Activated T-helper 1 cell treated with anti-CD3 and anti-CD28 coated beads, Interleukin-12 subunit alpha, Interleukin-12 subunit beta, Interleukin-2, Interleukin-4 antibody, amounts not matched to agents 30 ng/mL and 10 ng/mL and 1 ng/mL, durations not matched to agents 14 hours and 24 hours and 36 hours (primary cell): ENCODE measurements at regions of chr3 and their contacts with region 1.

Region 1: GRCh38 chr3:183285828-183286457 is 32.9 kb downstream of the B3GNT5 start:
- DNase-seq: peak; percentile 90
- H3K4me3 Mint-ChIP-seq: peak overlapping the region; percentile 60
- H3K27ac Mint-ChIP-seq: peak overlapping the region; percentile 94
- H3K4me1 Mint-ChIP-seq: peaks cover 36% of the 10 kb centered on the region
- H3K27me3 Mint-ChIP-seq: no peaks in the 10 kb centered on the region

Region 2: DNA sequence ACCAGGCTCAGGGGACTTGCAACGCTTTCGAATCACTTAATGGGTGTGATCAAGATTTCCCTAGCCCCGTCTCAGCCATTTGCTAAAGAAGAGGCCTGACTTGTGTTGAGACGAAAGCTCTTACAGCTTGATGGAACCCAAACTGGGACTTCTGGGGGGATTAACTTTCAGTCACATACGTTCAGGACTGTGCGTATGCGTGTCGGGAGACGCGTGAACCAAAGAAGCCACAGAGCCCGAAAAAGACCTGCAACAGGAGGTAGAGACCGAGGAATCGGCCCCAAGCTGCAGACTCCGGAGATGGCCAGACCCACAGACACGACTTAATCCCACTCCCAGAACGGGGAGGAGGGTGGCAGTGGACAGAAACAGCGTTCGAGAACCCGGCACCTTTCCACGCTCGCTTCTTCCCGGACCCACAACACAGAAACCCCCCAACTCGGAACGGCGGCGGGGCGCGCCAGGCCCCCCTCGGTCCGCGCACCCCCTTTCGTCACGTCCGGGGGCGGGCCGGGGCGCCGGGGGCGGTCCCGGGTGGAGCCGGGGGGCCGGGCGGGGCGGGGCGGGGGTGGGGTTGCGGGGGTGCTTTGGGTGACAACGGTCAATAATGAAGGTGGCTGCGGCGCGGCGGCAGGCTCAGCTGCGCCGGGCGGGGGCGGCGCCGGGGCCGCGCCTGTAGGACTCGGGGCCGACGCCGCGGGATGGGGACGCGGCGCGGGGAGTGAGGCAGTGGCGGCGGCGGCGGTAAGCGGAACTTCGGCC is 492.9 kb before region 1 on chr3 and contains the start of gene ATP11B:
- intact Hi-C with region 1: loop called (anchors 10 kb)
- DNase-seq: peak; percentile 75
- H3K4me3 Mint-ChIP-seq: peak within 1 kb of the TSS; percentile 94
- H3K27ac Mint-ChIP-seq: peak within 1 kb of the TSS; percentile 98
- H3K4me1 Mint-ChIP-seq: peaks cover 34% of the 10 kb centered on the region
- H3K27me3 Mint-ChIP-seq: no peaks in the 10 kb centered on the region
- total RNA-seq, gene ATP11B: 92.3 and 95.1 TPM in 2 replicates

Region 3: DNA sequence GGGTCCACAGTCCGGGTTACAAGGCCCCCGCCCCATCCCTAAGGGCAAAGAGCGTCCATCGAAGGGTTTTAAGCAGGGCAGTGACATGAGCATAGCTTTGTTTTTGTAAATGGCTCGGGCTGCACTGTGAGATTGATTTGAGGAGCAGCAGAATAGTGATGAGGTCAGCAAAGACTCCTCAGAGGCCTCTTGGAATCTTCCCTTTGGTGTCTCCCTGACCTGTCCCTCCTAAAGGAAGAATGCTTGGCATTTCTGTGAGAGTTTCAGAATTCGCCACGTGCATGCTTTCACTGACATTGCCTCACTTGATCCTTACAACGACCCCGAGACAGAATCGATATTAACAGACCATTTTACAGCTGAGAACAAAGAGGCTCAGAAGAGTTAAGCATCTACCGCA is 143.7 kb before region 1 on chr3:
- intact Hi-C with region 1: no loop called
- DNase-seq: no peak
- H3K4me3 Mint-ChIP-seq: no peak overlapping the region
- H3K27ac Mint-ChIP-seq: no peak overlapping the region
- H3K4me1 Mint-ChIP-seq: no peaks in the 10 kb centered on the region
- H3K27me3 Mint-ChIP-seq: no peaks in the 10 kb centered on the region

Region 4: DNA sequence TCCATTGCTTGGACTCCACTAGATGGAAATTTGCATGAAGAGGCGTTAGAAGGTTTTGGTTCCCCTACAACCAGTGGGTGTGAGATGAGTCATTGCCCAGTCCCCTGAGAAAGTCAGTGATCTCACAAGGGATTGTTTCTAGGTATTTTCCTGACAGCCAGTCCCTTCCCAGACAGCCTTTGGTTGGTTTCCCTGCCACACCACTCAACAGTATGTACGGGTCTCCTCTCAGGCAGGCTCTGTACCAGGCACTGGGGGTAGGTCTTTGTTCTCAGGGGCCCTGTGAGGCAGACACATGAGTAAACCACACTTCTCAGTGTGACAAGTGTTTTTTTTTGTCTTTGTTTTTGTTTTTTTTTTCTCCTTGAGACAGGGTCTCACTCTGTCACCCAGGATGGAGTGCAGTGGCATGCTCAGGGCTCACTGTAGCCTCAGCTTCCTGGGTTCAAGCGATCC is 127.4 kb before region 1 on chr3:
- intact Hi-C with region 1: loop called (anchors 1 kb)
- DNase-seq: peak; percentile 33
- H3K4me3 Mint-ChIP-seq: peak overlapping the region; percentile 45
- H3K27ac Mint-ChIP-seq: peak overlapping the region; percentile 73
- H3K4me1 Mint-ChIP-seq: peaks cover 48% of the 10 kb centered on the region
- H3K27me3 Mint-ChIP-seq: no peaks in the 10 kb centered on the region

Region 5: DNA sequence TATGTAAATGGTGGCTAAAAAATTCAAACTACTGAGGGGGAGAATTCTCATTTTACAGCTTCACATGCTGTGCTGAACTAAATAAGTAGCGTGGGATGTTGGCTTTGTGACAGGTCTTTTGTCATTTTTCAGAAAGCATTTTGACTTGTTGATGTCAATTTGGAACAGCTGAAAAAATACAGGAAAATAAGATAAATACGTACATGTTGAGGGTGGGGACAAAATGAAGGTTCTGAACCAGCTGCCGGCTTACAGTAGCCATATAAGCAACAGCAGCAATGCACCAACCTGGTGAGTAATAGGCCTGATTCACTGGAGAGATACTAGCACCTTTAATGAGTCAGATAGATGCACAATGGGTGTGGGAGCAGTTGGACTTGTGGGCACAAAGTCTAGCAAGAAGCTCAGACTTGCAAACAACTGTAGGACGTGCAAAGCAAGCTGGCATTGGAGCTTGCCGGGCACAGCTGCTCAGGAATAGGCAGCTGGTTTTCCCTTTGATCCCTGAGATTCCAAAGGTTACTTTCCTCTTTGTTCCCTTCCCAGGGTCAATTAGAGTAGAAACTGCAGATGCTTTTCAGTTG is 20.0 kb before region 1 on chr3:
- intact Hi-C with region 1: loop called (anchors 1 kb)
- DNase-seq: peak; percentile 7
- H3K4me3 Mint-ChIP-seq: peak overlapping the region; percentile 25
- H3K27ac Mint-ChIP-seq: no peak overlapping the region
- H3K4me1 Mint-ChIP-seq: peaks cover 15% of the 10 kb centered on the region
- H3K27me3 Mint-ChIP-seq: no peaks in the 10 kb centered on the region

Region 6: GRCh38 chr3:183377307-183377959 is 91.5 kb after region 1 on chr3:
- intact Hi-C with region 1: loop called (anchors 1 kb)
- DNase-seq: no peak
- H3K4me3 Mint-ChIP-seq: no peak overlapping the region
- H3K27ac Mint-ChIP-seq: no peak overlapping the region
- H3K4me1 Mint-ChIP-seq: peaks cover 36% of the 10 kb centered on the region
- H3K27me3 Mint-ChIP-seq: no peaks in the 10 kb centered on the region

Region 7: GRCh38 chr3:183468424-183468823 is 182.5 kb after region 1 on chr3:
- intact Hi-C with region 1: loop called (anchors 1 kb)
- DNase-seq: no peak
- H3K4me3 Mint-ChIP-seq: peak overlapping the region; percentile 12
- H3K27ac Mint-ChIP-seq: peak overlapping the region; percentile 75
- H3K4me1 Mint-ChIP-seq: peaks cover 16% of the 10 kb centered on the region
- H3K27me3 Mint-ChIP-seq: peaks cover 2% of the 10 kb centered on the region

Region 8: GRCh38 chr3:183489455-183490210 is 203.7 kb after region 1 on chr3:
- intact Hi-C with region 1: no loop called
- DNase-seq: no peak
- H3K4me3 Mint-ChIP-seq: no peak overlapping the region
- H3K27ac Mint-ChIP-seq: no peak overlapping the region
- H3K4me1 Mint-ChIP-seq: no peaks in the 10 kb centered on the region
- H3K27me3 Mint-ChIP-seq: no peaks in the 10 kb centered on the region